Endothelial cell of umbilical vein (primary cell): ENCODE measurements at regions of chr4 and their contacts with region 1.

Region 1: GRCh38 chr4:5037553-5038551 is 13.4 kb upstream of the STK32B start:
- DNase-seq: peak; percentile 83
- H3K4me3 ChIP-seq: no peak overlapping the region
- H3K27ac ChIP-seq: peak overlapping the region; percentile 88
- H3K4me1 ChIP-seq: peaks cover 43% of the 10 kb centered on the region
- H3K27me3 ChIP-seq: no peaks in the 10 kb centered on the region
- CTCF ChIP-seq: no peak
- POLR2A ChIP-seq: no peak

Region 2: GRCh38 chr4:5084911-5085475 is 47.1 kb after region 1 on chr4:
- CTCF ChIA-PET with region 1: no interaction called
- POLR2A ChIA-PET with region 1: no interaction called
- dilution Hi-C with region 1: no loop called
- intact Hi-C with region 1: loop called (anchors 5 kb)
- DNase-seq: peak; percentile 71
- H3K4me3 ChIP-seq: no peak overlapping the region
- H3K27ac ChIP-seq: peak overlapping the region; percentile 52
- H3K4me1 ChIP-seq: peaks cover 2% of the 10 kb centered on the region
- H3K27me3 ChIP-seq: no peaks in the 10 kb centered on the region
- CTCF ChIP-seq: no peak
- POLR2A ChIP-seq: no peak

Region 3: DNA sequence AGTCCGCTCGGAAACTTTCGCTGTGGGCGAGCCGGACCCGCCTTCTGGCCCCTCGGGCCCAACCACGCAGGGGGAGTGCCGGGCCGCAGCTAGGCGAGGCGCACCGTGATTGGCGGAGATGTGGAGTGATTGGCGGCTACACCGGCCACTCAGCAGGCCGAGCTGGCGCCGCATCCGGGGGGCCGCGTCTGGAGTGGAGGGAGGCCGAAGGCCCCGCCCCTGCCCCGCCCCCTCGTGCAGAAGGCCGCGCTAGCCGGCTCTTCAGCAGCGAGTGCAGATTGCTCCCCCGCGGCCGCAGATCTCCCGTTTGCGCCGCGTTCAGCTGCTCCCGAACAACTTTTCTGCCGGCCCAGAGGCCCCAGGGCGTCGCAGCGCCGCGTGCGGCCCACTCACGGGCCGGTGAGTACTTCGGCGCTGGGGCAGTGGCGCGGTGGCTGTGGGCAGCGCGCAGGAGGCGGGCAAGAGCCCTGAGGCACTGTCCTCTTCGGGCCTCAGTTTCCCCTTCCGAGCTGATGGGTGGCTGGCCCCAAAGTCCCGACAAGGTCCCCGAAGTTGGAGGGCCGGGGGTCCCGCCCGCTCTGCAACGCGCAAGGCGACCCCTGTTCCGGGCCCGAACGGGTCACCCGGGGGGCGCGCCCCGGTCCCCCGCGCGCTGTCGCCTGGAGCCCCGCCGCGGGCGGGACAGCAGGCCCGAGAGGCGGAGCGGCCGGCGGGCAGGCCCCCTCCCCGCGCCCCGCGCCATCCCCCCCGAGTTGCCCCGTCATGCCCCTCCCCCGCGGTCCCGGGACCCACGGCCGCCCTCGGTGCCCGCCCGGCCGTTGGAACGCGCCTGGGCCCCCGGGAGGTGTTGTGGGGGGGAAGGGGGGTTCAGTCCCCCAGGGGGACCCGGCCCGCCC is 1232.0 kb after region 1 on chr4 and contains the start of gene WFS1:
- CTCF ChIA-PET with region 1: no interaction called
- POLR2A ChIA-PET with region 1: no interaction called
- dilution Hi-C with region 1: no loop called
- intact Hi-C with region 1: loop called (anchors 10 kb)
- DNase-seq: peak; percentile 99
- H3K4me3 ChIP-seq: peak within 1 kb of the TSS; percentile 60 to 76 (median 61)
- H3K27ac ChIP-seq: no peak within 1 kb of the TSS
- H3K4me1 ChIP-seq: peaks cover 15% of the 10 kb centered on the region
- H3K27me3 ChIP-seq: peaks cover 11 to 13% of the 10 kb centered on the region in 2 experiments
- CTCF ChIP-seq: no peak
- POLR2A ChIP-seq: peak; percentile 54
- total RNA-seq, gene WFS1: 42.7 and 48.2 TPM in 2 replicates